ENCODE measurements at regions of chr3 and their contacts with region 1.

Region 1: GRCh38 chr3:10010486-10011465 is 15.5 kb upstream of the FANCD2 start:
- DNase-seq: peak; percentile 95 to 99 (median 97)
- ATAC-seq: peak; percentile 88 to 92 (median 90)
- H3K4me3 ChIP-seq: peak overlapping the region; percentile 39 to 90 (median 66)
- H3K27ac ChIP-seq: peak overlapping the region in 10 of 12 donors; percentile 17 to 82 (median 58)
- H3K4me1 ChIP-seq: peaks cover 3 to 44% (median 32%) of the 10 kb centered on the region in 12 donors
- H3K27me3 ChIP-seq: no peaks in the 10 kb centered on the region
- CTCF ChIP-seq: no peak
- POLR2A ChIP-seq: peak; percentile 53 to 73

Region 2: GRCh38 chr3:9932843-9933560 is 77.8 kb before region 1 on chr3:
- intact Hi-C with region 1: loop called in 1 of 10 experiments (anchors 5 kb)
- DNase-seq: peak; percentile 80 to 91 (median 85)
- ATAC-seq: peak; percentile 41 to 86 (median 78)
- H3K4me3 ChIP-seq: peak overlapping the region; percentile 35 to 92 (median 74)
- H3K27ac ChIP-seq: peak overlapping the region; percentile 74 to 98 (median 93)
- H3K4me1 ChIP-seq: peaks cover 7 to 40% (median 23%) of the 10 kb centered on the region in 12 donors
- H3K27me3 ChIP-seq: no peaks in the 10 kb centered on the region
- CTCF ChIP-seq: peak; percentile 48 to 84 (median 66)
- POLR2A ChIP-seq: peak in 1 of 2 donors; percentile 5

Region 3: DNA sequence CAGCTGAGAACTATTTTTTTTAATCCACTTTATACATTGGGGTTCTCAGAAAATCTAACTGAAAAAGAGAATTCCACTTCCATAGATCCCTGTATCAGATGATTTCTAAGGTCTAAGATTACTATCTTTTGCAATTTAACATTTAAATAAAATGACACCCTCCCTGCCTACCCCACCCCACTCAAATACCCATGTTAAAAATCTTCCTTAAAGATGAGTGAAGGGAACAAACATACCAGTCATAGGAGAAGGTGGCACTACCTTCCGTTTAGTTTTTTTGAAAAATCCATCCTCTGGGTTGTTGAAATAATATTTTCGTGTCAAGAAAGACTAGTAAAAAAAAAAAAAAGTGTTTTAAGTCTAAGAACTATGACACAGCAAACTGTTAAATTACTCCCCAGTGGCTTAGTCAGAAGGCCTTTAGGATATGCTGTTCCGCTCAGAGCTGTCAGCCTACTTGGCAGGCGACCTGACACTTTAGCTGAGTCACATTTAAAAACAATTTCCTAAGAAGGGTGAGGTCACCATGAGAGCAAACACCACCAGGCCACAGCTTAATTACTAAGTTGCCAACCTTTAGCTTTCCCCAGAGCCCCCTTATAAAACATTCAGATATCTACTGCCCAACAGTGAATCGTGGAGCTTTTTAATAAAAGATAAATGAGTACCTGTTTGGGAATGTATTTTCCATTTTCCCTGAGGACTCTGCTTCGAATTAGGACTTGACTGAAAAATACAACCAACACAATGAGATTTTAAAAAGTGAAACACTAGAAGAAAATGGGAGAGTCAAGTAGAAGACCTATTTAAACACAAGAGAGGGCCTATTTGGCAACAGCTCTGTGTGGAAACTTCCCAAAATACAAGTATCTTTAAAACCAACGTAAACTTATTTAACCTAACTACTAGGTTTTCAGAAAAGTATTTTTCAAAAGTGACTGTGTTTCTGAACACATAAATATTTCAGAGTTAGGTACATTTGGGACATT is 33.8 kb before region 1 on chr3:
- intact Hi-C with region 1: loop called in 2 of 10 experiments (anchors 1 to 2 kb)
- DNase-seq: peak; percentile 64 to 88 (median 68)
- ATAC-seq: peak; percentile 97 to 99 (median 98)
- H3K4me3 ChIP-seq: peak overlapping the region in 11 of 12 donors; percentile 3 to 45 (median 28)
- H3K27ac ChIP-seq: peak overlapping the region; percentile 59 to 87 (median 80)
- H3K4me1 ChIP-seq: peaks cover 0 to 34% (median 17%) of the 10 kb centered on the region in 12 donors
- H3K27me3 ChIP-seq: no peaks in the 10 kb centered on the region
- CTCF ChIP-seq: no peak
- POLR2A ChIP-seq: no peak

Region 4: DNA sequence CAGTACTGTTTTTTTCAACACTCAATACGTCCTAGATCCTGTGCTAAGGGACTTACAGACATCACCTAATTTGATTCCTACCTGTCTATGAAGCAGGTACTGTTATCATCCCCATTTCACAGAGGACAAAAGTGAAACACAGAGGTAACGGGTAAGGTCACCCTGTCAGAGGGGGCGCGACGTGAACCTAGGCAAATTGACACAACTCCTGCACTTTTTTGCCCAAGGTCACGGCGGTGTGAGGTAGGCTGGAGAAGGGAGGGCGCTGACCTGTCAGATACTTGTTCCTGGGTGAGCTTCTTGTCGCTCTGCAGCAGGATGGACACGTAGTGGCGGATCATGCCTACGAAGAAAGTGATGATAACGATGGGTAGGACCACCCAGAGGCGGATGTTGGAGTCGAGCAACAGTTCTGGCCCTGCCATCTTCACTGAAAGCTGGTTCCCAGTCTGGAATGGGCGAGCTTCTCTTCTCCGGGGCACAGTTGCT is 24.5 kb before region 1 on chr3:
- intact Hi-C with region 1: loop called in 1 of 10 experiments (anchors 2 kb)
- DNase-seq: no peak
- ATAC-seq: peak; percentile 38 to 69 (median 54)
- H3K4me3 ChIP-seq: peak overlapping the region; percentile 60 to 100 (median 96)
- H3K27ac ChIP-seq: peak overlapping the region in 11 of 12 donors; percentile 71 to 88 (median 84)
- H3K4me1 ChIP-seq: peaks cover 2 to 33% (median 24%) of the 10 kb centered on the region in 12 donors
- H3K27me3 ChIP-seq: no peaks in the 10 kb centered on the region
- CTCF ChIP-seq: no peak
- POLR2A ChIP-seq: no peak